Esophagus squamous epithelium (tissue), 5 donors: ENCODE measurements at regions of chr1 and their contacts with region 1.

Region 1: DNA sequence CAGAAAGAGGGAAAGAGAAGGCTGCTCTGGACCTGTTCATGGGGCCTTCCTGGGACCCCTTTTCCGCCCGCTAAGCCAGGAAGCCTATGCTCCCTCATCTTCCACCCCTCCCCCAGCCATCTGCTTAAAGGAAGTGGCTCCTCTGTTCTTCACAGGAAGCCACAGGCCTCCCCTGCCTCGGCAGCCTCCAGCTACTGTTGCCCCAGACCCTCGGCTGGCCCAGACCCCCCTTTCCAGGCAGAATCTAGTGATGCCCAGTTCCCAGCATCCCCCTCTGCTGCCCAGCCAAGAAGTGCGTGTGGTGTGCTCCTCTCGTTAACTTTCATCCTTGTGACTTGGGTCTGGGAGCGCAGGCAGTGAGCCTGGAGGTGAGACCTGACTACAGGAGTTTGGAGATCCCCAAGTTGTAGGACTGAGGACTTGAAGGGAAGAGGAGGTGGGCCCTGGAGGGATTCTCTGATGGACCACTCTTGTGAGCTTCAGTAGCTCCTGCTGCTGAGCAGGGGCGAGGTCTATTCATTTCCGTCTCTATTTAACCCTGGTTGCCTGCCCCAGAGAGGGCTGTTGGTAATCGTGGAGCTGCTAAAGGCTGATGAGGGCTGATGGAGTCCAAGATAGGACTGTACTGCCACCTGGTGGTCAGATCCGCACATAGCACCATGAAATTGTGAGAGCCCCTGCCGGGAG is 9.1 kb downstream of the IFI6 start:
- DNase-seq: no peak
- H3K4me3 ChIP-seq: no peak overlapping the region
- H3K27ac ChIP-seq: peak overlapping the region; percentile 53 to 81 (median 62)
- H3K4me1 ChIP-seq: peaks cover 30 to 56% (median 36%) of the 10 kb centered on the region in 3 donors
- H3K27me3 ChIP-seq: no peaks in the 10 kb centered on the region
- CTCF ChIP-seq: peak; percentile 57 to 99 (median 97)
- POLR2A ChIP-seq: no peak

Region 2: GRCh38 chr1:27609618-27610240 is 53.1 kb before region 1 on chr1:
- intact Hi-C with region 1: loop called (anchors 2 kb)
- DNase-seq: no peak
- H3K4me3 ChIP-seq: no peak overlapping the region
- H3K27ac ChIP-seq: no peak overlapping the region
- H3K4me1 ChIP-seq: peaks cover 20 to 45% (median 23%) of the 10 kb centered on the region in 3 donors
- H3K27me3 ChIP-seq: no peaks in the 10 kb centered on the region
- CTCF ChIP-seq: no peak
- POLR2A ChIP-seq: no peak

Region 3: GRCh38 chr1:27858072-27858958 is 195.5 kb after region 1 on chr1:
- intact Hi-C with region 1: no loop called
- DNase-seq: no peak
- H3K4me3 ChIP-seq: peak overlapping the region in 1 of 4 donors; percentile 42
- H3K27ac ChIP-seq: peak overlapping the region in 3 of 4 donors; percentile 31 to 39 (median 34)
- H3K4me1 ChIP-seq: peaks cover 9 to 21% (median 11%) of the 10 kb centered on the region in 3 donors
- H3K27me3 ChIP-seq: no peaks in the 10 kb centered on the region
- CTCF ChIP-seq: peak; percentile 94 to 98 (median 98)
- POLR2A ChIP-seq: no peak

Region 4: DNA sequence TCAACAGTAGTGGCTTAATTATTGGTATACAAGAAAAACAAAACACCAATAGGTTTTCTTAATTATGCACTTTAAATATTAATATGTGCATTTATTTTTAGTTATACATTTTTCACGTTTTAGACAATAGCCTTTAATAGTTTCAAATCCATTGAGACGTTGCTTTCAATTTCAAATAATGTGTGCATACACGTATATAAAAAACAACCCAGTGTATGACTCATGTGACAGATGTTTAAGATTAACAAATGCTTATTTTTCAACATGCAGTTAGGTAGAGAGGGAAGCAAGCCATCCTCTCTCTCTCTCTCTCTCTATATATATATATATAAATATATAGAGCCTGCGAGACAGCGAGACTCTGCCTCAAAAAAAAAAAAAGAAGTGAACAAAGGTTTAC is 401.2 kb after region 1 on chr1:
- intact Hi-C with region 1: no loop called
- DNase-seq: no peak
- H3K4me3 ChIP-seq: no peak overlapping the region
- H3K27ac ChIP-seq: no peak overlapping the region
- H3K4me1 ChIP-seq: peaks cover 0 to 34% (median 0%) of the 10 kb centered on the region in 3 donors
- H3K27me3 ChIP-seq: no peaks in the 10 kb centered on the region
- CTCF ChIP-seq: no peak
- POLR2A ChIP-seq: no peak